ENCODE measurements at regions of chr15 and their contacts with region 1.

Region 1: DNA sequence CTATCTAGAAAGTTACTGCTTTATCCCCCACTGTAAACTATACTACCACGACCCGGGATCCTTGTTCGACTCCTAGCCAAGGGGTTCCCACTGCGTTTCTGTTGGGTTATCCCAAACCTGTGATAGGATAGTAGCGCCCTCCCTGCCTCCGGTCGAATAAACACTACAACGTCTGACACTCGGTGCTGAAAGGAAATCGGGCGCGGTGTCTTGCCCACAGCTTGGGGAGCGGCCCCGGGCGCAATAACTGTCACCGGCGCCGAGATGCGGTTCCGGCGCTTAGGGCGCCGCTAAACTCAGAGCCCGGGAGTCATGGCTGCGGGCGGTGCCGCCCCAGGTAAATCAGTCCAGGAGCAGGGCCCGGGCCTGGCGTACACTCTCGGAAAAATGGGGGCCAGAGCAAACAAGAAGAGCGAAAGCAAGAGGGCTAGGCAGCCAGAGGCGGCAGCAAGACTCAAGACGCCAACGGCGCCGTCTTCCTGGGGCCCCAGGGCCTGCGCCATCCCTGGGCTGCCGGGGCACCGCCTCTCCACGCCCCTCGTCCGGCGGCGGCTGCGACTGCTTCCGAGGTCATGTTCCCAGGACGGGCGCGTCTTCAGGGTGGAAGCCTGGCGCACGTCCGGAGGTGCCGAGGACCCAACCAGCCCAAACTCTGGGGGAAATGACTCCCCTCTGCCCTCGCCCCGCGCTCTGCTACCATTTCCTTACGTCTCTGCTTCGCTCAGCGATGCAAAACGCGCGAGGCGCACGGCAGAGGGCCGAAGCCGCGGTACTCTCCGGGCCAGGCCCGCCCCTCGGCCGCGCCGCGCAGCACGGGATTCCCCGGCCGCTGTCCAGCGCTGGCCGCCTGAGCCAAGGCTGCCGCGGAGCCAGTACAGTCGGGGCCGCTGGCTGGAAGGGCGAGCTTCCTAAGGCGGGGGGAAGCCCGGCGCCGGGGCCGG is at the start of gene DUT:
- DNase-seq: peak; percentile 40
- ATAC-seq: peak; percentile 96
- H3K4me3 ChIP-seq: peak within 1 kb of the TSS; percentile 77 to 86 (median 78)
- H3K27ac ChIP-seq: peak within 1 kb of the TSS; percentile 71
- H3K4me1 ChIP-seq: peaks cover 38% of the 10 kb centered on the region
- H3K27me3 ChIP-seq: no peaks in the 10 kb centered on the region; a peak in 1 of 5 replicates
- CTCF ChIP-seq: 0 out of 2 replicates have a peak, but pooled peaks have one; percentile 4
- EP300 ChIP-seq: 0 out of 4 replicates have a peak, but pooled peaks of 1 of the 2 experiments have one; percentile 20
- POLR2A ChIP-seq: peak; percentile 74 to 91
- RAD21 ChIP-seq: no peak
- total RNA-seq, gene DUT: 131 and 133 TPM in 2 replicates

Region 2: DNA sequence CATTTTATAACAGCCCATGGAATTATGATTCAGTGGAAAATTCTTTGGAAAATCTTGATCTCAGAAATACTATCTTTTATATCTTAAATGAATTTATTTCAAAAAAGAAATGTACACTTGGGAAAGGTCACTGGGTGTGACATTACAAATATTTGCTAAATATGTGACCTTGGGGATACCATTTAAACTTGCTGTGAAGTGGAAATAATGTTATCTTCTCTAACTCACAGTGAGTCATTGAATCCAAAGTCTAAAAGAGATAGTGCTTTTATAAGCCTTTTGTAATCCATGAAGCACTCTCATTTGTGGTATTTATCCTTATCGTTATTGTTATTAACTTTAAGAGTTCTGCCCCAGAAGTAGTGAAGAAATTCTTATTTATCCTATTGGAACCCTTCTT is 903.7 kb before region 1 on chr15:
- CTCF ChIA-PET with region 1: no interaction called
- POLR2A ChIA-PET with region 1: no interaction called
- in situ Hi-C with region 1: no loop called
- intact Hi-C with region 1: loop called (anchors 2 kb)
- DNase-seq: peak; percentile 70
- ATAC-seq: peak; percentile 79
- H3K4me3 ChIP-seq: no peak overlapping the region
- H3K27ac ChIP-seq: no peak overlapping the region
- H3K4me1 ChIP-seq: peaks cover 23% of the 10 kb centered on the region
- H3K27me3 ChIP-seq: no peaks in the 10 kb centered on the region; a peak in 1 of 5 replicates
- CTCF ChIP-seq: no peak
- EP300 ChIP-seq: peak in 1 of 2 experiments; percentile 65; a peak in 2 of 4 replicates
- POLR2A ChIP-seq: no peak
- RAD21 ChIP-seq: no peak

Region 3: GRCh38 chr15:48285329-48286214 is 45.6 kb before region 1 on chr15:
- CTCF ChIA-PET with region 1: no interaction called
- POLR2A ChIA-PET with region 1: no interaction called
- in situ Hi-C with region 1: no loop called
- intact Hi-C with region 1: no loop called
- DNase-seq: peak; percentile 58
- ATAC-seq: peak; percentile 83
- H3K4me3 ChIP-seq: no peak overlapping the region
- H3K27ac ChIP-seq: no peak overlapping the region
- H3K4me1 ChIP-seq: no peaks in the 10 kb centered on the region
- H3K27me3 ChIP-seq: no peaks in the 10 kb centered on the region
- CTCF ChIP-seq: peak; percentile 70
- EP300 ChIP-seq: no peak
- POLR2A ChIP-seq: no peak
- RAD21 ChIP-seq: no peak

Region 4: DNA sequence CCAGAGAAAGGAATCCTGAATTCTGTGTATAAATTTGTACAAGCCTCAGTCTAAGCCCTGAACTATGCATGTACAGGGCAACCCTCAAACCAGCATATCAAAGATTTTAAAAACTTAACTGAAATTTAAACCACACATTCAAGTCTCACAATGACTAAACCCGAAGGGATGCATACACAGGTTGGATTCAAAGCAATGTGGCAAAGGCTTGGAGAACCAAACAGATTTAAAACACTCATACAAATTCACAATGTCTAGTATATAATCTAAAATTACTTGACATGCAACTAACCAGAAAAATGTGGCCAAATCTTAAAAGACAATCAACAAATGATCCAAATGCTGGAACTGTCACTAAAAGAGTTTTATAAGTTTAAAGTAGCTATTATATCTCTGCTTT is 443.4 kb after region 1 on chr15:
- CTCF ChIA-PET with region 1: no interaction called
- POLR2A ChIA-PET with region 1: no interaction called
- in situ Hi-C with region 1: no loop called
- intact Hi-C with region 1: no loop called
- DNase-seq: no peak
- ATAC-seq: no peak
- H3K4me3 ChIP-seq: no peak overlapping the region
- H3K27ac ChIP-seq: no peak overlapping the region
- H3K4me1 ChIP-seq: peaks cover 9% of the 10 kb centered on the region
- H3K27me3 ChIP-seq: no peaks in the 10 kb centered on the region; a peak in 1 of 5 replicates
- CTCF ChIP-seq: no peak
- EP300 ChIP-seq: no peak
- POLR2A ChIP-seq: no peak
- RAD21 ChIP-seq: no peak

Measured in HepG2 (cell line).